ENCODE measurements at regions of chr4 and their contacts with region 1.

Region 1: DNA sequence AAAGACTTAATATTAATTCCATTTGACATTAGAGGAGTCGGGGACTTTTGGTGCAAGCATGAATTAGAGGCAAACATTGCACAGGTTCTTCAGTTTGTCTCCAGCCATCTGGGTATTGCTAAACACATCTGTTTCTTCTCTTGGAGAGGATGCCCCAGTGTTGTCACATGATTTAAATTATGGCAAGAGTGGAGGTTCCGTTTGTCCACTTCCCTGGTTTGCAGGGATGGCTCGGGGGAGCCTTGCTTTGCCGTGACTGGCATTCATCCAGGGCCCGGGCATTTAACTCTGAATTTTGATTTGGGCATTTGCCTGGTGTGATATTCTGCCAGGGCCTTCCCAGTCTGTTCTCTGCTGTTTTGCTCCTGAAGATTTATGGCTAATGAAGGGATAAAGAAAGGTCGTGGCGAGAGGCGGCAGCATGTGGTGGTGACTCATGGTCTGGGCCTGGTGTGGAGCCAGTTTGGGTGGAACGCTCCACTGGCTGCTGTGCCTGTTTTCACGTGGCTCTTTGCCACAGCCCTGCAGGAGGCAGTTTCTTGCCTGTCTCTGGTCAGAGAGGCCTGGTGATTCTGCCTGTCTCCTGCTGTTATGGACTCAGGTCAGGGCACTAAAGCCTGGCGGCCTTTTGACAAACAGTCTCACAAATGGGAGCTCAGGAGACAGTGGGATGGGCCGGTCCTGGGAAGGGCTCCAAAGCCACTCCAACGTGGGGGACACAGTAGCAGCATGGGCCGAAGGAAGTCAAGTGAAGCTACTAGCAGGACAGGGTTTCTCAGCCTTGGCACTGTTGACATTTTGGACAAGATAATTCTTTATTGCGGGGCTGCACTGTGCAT is 99.4 kb upstream of the PGRMC2 start:
- DNase-seq: peak; percentile 97
- ATAC-seq: peak; percentile 68
- H3K4me3 ChIP-seq: no peak overlapping the region
- H3K27ac ChIP-seq: peak overlapping the region; percentile 91
- H3K4me1 ChIP-seq: peaks cover 34% of the 10 kb centered on the region
- H3K27me3 ChIP-seq: no peaks in the 10 kb centered on the region
- CTCF ChIP-seq: 0 out of 2 replicates have a peak, but pooled peaks have one; percentile 18
- POLR2A ChIP-seq: peak; percentile 53
- RAD21 ChIP-seq: peak; percentile 29

Region 2: DNA sequence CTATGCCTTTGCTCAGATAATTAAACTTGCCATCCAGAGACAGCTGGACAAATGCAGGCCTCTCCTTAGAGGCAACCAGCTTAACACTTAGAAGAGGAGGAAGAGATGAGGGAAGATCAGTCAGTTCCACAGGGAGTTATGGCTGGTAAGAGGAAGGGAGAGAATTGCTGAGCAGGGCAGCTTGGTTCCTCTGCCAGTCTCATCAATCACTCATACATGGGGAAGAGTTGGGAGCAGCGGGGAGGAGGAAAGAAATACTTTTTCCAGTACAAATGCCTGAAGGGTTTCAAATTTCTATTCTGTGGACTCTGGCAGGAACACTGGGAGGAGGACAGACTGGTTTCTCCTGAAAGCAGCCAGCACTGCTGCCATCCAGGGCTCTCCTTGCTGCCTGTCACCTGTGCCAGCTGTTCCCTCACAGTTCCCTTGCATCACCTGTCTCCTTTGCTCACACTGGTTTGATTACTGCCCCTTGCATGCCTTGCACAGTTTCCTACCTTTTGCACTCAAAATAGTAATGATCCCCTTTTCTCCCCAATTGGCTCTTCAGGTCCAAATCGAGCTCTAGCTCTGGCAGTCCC is 158.9 kb before region 1 on chr4:
- CTCF ChIA-PET with region 1: interaction called, 3 read pairs
- POLR2A ChIA-PET with region 1: no interaction called
- dilution Hi-C with region 1: no loop called
- in situ Hi-C with region 1: no loop called
- intact Hi-C with region 1: loop called (anchors 5 kb)
- DNase-seq: no peak
- ATAC-seq: peak; percentile 12; the same call in 1 of the 2 replicates
- H3K4me3 ChIP-seq: no peak overlapping the region
- H3K27ac ChIP-seq: peak overlapping the region; percentile 52; the same call in 1 of the 2 replicates
- H3K4me1 ChIP-seq: peaks cover 19% of the 10 kb centered on the region
- H3K27me3 ChIP-seq: no peaks in the 10 kb centered on the region
- CTCF ChIP-seq: no peak
- POLR2A ChIP-seq: no peak
- RAD21 ChIP-seq: no peak

Region 3: GRCh38 chr4:128376958-128377357 is 10.0 kb before region 1 on chr4:
- CTCF ChIA-PET with region 1: no interaction called
- POLR2A ChIA-PET with region 1: no interaction called
- dilution Hi-C with region 1: no loop called
- in situ Hi-C with region 1: no loop called
- intact Hi-C with region 1: no loop called
- DNase-seq: no peak
- ATAC-seq: no peak
- H3K4me3 ChIP-seq: no peak overlapping the region
- H3K27ac ChIP-seq: no peak overlapping the region
- H3K4me1 ChIP-seq: peaks cover 5% of the 10 kb centered on the region
- H3K27me3 ChIP-seq: no peaks in the 10 kb centered on the region
- CTCF ChIP-seq: no peak
- POLR2A ChIP-seq: no peak
- RAD21 ChIP-seq: no peak

Region 4: GRCh38 chr4:128528793-128529553 is 142.0 kb after region 1 on chr4:
- CTCF ChIA-PET with region 1: no interaction called
- POLR2A ChIA-PET with region 1: no interaction called
- dilution Hi-C with region 1: no loop called
- in situ Hi-C with region 1: no loop called
- intact Hi-C with region 1: loop called (anchors 2 kb)
- DNase-seq: peak; percentile 99
- ATAC-seq: peak; percentile 94
- H3K4me3 ChIP-seq: no peak overlapping the region
- H3K27ac ChIP-seq: peak overlapping the region; percentile 97
- H3K4me1 ChIP-seq: peaks cover 25% of the 10 kb centered on the region
- H3K27me3 ChIP-seq: no peaks in the 10 kb centered on the region
- CTCF ChIP-seq: no peak
- POLR2A ChIP-seq: no peak
- RAD21 ChIP-seq: peak; percentile 17; the same call in 1 of the 2 replicates

Region 5: DNA sequence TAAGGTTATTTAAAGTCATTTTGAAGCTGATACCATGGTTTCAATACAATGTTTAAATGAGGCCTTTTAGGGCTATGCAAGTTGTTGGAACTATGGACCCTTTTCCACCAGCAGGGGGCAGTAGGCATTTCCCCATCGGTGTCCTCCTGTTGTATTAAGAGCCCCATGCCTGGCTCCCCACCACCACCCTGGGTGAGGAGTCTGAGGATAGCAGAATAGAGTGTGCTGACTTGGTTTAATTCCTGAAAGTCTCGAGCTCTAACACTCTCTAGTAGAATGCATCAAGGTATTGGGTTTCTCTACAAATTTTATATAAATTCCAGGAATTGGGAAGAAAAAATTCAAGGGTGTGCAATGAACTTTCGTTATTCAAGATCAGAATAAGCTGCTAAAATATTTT is 187.7 kb after region 1 on chr4:
- CTCF ChIA-PET with region 1: no interaction called
- POLR2A ChIA-PET with region 1: no interaction called
- dilution Hi-C with region 1: no loop called
- in situ Hi-C with region 1: no loop called
- intact Hi-C with region 1: loop called (anchors 5 kb)
- DNase-seq: peak; percentile 68
- ATAC-seq: peak; percentile 25
- H3K4me3 ChIP-seq: no peak overlapping the region
- H3K27ac ChIP-seq: no peak overlapping the region
- H3K4me1 ChIP-seq: peaks cover 22% of the 10 kb centered on the region
- H3K27me3 ChIP-seq: no peaks in the 10 kb centered on the region
- CTCF ChIP-seq: peak; percentile 58
- POLR2A ChIP-seq: no peak
- RAD21 ChIP-seq: peak; percentile 55

Region 6: GRCh38 chr4:128590773-128591172 is 203.8 kb after region 1 on chr4:
- CTCF ChIA-PET with region 1: no interaction called
- POLR2A ChIA-PET with region 1: no interaction called
- dilution Hi-C with region 1: no loop called
- in situ Hi-C with region 1: no loop called
- intact Hi-C with region 1: no loop called
- DNase-seq: peak; percentile 37
- ATAC-seq: no peak
- H3K4me3 ChIP-seq: no peak overlapping the region
- H3K27ac ChIP-seq: no peak overlapping the region
- H3K4me1 ChIP-seq: no peaks in the 10 kb centered on the region
- H3K27me3 ChIP-seq: no peaks in the 10 kb centered on the region
- CTCF ChIP-seq: 0 out of 2 replicates have a peak, but pooled peaks have one; percentile 4
- POLR2A ChIP-seq: no peak
- RAD21 ChIP-seq: no peak

Region 7: DNA sequence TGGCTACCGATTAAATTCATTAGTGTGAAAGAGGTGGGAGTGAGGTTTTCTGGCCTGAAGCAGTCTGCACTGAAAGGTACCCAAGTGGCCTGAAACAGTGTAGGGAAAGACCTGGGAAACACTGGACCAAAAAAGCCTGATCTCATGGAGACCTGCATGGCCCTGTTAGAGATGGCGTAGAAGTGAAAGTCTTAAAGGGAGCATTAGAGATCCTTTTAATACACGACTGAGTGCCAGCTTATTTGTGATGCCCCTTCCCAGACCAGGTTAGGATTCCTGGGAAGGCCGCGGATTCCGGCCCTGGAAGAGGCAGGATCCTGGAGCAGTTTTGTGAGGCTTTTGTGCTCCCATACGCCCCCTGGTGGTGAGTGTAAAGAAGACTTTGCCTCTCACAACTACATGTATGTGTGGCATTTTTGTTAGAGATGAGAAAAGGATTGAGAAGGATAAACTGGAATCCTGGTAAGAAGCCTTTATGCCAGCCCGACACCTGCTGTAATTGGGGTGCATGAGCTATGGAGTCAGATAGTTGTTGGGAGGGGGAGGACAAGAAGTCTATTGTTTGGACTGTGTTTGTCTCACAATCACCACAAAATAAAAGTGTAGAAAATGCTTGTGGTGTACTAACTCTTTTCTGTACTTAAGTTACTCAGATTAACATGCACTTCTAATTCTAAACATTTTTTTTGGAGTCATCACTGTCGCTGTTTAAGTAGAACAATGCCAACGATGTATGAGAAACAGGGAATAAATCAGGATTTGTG is 476.5 kb after region 1 on chr4:
- CTCF ChIA-PET with region 1: no interaction called
- POLR2A ChIA-PET with region 1: no interaction called
- dilution Hi-C with region 1: no loop called
- in situ Hi-C with region 1: no loop called
- intact Hi-C with region 1: loop called (anchors 5 kb)
- DNase-seq: peak; percentile 80
- ATAC-seq: peak; percentile 65; the same call in 1 of the 2 replicates
- H3K4me3 ChIP-seq: no peak overlapping the region
- H3K27ac ChIP-seq: 0 out of 2 replicates have a peak overlapping the region, but pooled peaks have one; percentile 0
- H3K4me1 ChIP-seq: peaks cover 24% of the 10 kb centered on the region
- H3K27me3 ChIP-seq: no peaks in the 10 kb centered on the region
- CTCF ChIP-seq: peak; percentile 79
- POLR2A ChIP-seq: no peak
- RAD21 ChIP-seq: peak; percentile 78